ENCODE measurements at regions of chr7 and their contacts with region 1.

Region 1: DNA sequence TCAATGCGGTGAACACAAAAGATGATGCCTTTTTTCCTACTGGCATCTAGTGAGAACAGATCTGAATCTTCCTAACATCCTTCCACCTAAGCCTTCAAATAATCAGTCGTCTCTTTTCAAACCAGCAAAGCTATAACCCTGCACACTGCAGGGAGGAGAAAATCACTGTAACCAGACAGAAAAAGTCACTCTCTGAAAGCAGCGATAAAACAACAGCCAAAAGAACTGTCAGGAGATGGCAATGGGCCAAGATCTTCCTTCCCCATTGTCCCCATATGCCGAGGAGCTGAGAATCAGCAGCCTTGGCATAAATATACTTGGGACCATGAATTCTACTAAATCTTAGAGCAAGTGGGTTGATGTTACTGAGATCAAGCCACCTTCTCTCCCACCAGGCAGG is 13.1 kb downstream of the FZD9 start:
- DNase-seq: no peak
- ATAC-seq: no peak
- H3K4me3 ChIP-seq: no peak overlapping the region
- H3K27ac ChIP-seq: no peak overlapping the region
- H3K4me1 ChIP-seq: peaks cover 20 to 26% of the 10 kb centered on the region in 2 donors
- H3K27me3 ChIP-seq: no peaks in the 10 kb centered on the region
- CTCF ChIP-seq: no peak
- POLR2A ChIP-seq: no peak

Region 2: GRCh38 chr7:73329861-73330581 is 116.7 kb before region 1 on chr7:
- in situ Hi-C with region 1: loop called in 1 of 4 experiments (anchors 10 kb)
- intact Hi-C with region 1: no loop called
- DNase-seq: no peak
- ATAC-seq: no peak
- H3K4me3 ChIP-seq: no peak overlapping the region
- H3K27ac ChIP-seq: no peak overlapping the region
- H3K4me1 ChIP-seq: no peaks in the 10 kb centered on the region
- H3K27me3 ChIP-seq: no peaks in the 10 kb centered on the region
- CTCF ChIP-seq: no peak
- POLR2A ChIP-seq: no peak

Region 3: GRCh38 chr7:73342645-73343044 is 104.0 kb before region 1 on chr7:
- in situ Hi-C with region 1: loop called (anchors 5 to 10 kb)
- intact Hi-C with region 1: loop called (anchors 1 kb)
- DNase-seq: no peak
- ATAC-seq: peak; percentile 90 to 95
- H3K4me3 ChIP-seq: peak overlapping the region in 2 of 4 donors; percentile 18 to 37
- H3K27ac ChIP-seq: no peak overlapping the region
- H3K4me1 ChIP-seq: no peaks in the 10 kb centered on the region
- H3K27me3 ChIP-seq: no peaks in the 10 kb centered on the region
- CTCF ChIP-seq: peak; percentile 42 to 70 (median 66)
- POLR2A ChIP-seq: no peak

Region 4: GRCh38 chr7:73433924-73434700 is 12.6 kb before region 1 on chr7:
- in situ Hi-C with region 1: no loop called
- intact Hi-C with region 1: loop called (anchors 2 kb)
- DNase-seq: no peak
- ATAC-seq: peak; percentile 53 to 56
- H3K4me3 ChIP-seq: peak overlapping the region; percentile 37 to 58 (median 54)
- H3K27ac ChIP-seq: peak overlapping the region in 2 of 4 donors; percentile 72 to 83
- H3K4me1 ChIP-seq: peaks cover 10 to 23% of the 10 kb centered on the region in 2 donors
- H3K27me3 ChIP-seq: no peaks in the 10 kb centered on the region
- CTCF ChIP-seq: peak in 1 of 5 experiments; percentile 6
- POLR2A ChIP-seq: peak in 1 of 2 donors; percentile 53